Gastrocnemius medialis (tissue), 4 donors: ENCODE measurements at regions of chr17 and their contacts with region 1.

Region 1: GRCh38 chr17:16987830-16988601 is 16.1 kb upstream of the TNFRSF13B start:
- DNase-seq: peak; percentile 30 to 61
- ATAC-seq: peak; percentile 40 to 43
- H3K4me3 ChIP-seq: no peak overlapping the region
- H3K27ac ChIP-seq: no peak overlapping the region
- H3K4me1 ChIP-seq: no peaks in the 10 kb centered on the region
- H3K27me3 ChIP-seq: no peaks in the 10 kb centered on the region
- CTCF ChIP-seq: no peak
- POLR2A ChIP-seq: no peak

Region 2: DNA sequence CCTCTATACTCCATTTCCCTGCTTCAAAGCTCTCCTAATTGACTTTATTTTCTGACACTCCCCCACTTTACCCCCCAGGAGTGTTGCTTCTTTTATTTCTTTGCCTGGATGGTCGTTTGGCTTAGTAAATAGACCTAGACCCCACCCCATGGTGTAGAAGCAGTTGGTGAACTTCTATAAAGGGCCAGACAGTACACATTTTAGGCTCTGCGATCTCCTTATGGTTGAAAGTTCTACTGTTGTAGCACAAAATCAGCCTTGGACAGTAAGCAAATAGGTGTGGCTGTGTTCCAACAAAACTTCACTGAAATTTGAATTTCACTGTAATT is 450.9 kb before region 1 on chr17:
- in situ Hi-C with region 1: no loop called
- intact Hi-C with region 1: loop called (anchors 2 kb)
- DNase-seq: no peak
- ATAC-seq: no peak
- H3K4me3 ChIP-seq: peak overlapping the region in 1 of 4 donors; percentile 79
- H3K27ac ChIP-seq: peak overlapping the region in 1 of 4 donors; percentile 91
- H3K4me1 ChIP-seq: no peaks in the 10 kb centered on the region
- H3K27me3 ChIP-seq: no peaks in the 10 kb centered on the region
- CTCF ChIP-seq: peak in 1 of 5 experiments; percentile 1
- POLR2A ChIP-seq: no peak

Region 3: DNA sequence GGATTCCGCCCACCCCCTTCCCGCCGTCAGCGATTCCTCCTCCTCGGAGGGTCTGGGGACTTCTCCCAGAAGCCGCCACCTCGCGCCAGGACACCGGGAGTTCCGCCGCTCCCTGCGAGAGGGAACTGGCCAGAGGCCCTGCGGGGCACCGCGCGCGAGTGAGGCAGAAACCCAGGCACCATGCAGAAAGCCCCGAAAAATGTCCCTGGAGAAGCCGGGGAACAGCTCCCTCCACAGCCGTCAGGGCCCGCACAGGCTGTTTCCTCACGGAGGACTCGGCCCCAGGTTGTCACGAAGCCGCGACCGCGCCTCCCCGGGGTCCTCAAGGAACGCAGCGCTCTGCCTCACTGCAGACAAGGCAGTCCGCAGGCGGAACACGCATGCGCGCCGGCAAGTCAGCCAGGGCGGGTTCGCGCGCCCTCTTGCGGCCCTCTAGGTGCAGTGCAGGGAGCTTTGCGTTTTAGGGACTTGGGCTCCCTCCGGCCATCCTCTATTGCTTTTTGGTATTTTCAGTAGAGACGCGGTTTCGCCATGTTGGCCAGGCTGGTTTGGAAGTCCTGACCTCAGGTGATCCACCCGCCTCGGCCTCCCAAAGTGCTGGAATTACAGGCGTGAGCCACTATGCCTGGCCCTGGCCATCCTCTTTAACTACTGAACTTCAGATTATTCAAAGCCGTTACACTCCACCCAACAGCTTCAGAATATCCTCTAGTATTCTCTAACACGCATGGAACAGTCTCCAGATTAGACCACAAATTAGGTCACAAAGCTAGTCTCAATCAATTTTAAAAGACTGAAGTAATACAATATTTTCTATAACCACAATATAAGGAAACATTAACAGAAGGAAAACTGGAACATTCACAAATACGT is 398.7 kb before region 1 on chr17:
- in situ Hi-C with region 1: loop called in 2 of 4 experiments (anchors 25 kb)
- intact Hi-C with region 1: no loop called
- DNase-seq: peak; percentile 79 to 84
- ATAC-seq: peak; percentile 90 to 92
- H3K4me3 ChIP-seq: peak overlapping the region; percentile 64 to 79 (median 68)
- H3K27ac ChIP-seq: peak overlapping the region; percentile 35 to 62 (median 55)
- H3K4me1 ChIP-seq: peaks cover 4 to 8% of the 10 kb centered on the region in 2 donors
- H3K27me3 ChIP-seq: peaks cover 0 to 3% (median 0%) of the 10 kb centered on the region in 3 donors
- CTCF ChIP-seq: peak; percentile 91 to 100 (median 92)
- POLR2A ChIP-seq: no peak

Region 4: GRCh38 chr17:17151962-17152361 is 163.9 kb after region 1 on chr17:
- in situ Hi-C with region 1: loop called in 1 of 4 experiments (anchors 10 kb)
- intact Hi-C with region 1: no loop called
- DNase-seq: peak; percentile 92 to 97
- ATAC-seq: peak; percentile 88 to 90
- H3K4me3 ChIP-seq: no peak overlapping the region
- H3K27ac ChIP-seq: peak overlapping the region; percentile 89 to 95 (median 92)
- H3K4me1 ChIP-seq: peaks cover 54 to 66% of the 10 kb centered on the region in 2 donors
- H3K27me3 ChIP-seq: no peaks in the 10 kb centered on the region
- CTCF ChIP-seq: no peak
- POLR2A ChIP-seq: no peak

Region 5: DNA sequence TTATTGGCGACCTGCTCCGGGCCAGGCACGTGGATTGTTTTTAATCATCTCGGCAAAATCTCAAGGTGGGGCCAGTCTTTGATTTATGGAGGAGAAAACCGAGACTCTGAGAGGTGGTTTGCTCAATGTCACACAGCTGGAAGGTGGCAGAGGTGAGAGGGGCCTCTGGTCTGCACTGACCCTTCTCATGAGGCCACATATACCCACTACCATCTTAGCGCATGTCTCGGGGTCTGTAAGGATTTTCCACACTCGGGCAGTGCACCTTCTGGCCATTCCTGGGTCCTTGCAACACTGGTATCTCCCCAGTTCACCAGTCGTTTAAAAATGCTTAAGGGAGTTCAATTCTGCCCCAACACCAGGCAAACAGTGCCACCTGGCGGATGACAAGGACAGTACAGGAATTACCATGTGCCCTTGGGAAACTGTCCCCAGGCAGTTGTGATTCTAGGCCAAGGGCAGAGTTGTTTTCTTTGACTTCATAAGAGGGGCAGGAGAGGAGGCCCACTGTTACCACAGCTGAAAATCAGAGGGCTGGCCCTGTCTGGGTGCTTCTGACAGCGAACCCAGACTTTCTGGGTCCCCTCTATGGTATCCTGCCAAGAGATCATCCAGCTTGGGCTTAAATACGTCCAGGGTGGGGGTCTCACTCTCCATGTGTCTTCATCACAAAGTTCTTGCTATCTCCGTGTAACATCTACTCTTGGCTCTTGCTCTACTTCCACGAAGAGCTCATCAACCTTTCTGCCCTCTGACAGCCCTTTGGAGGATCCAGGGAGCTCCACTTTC is 653.8 kb after region 1 on chr17:
- in situ Hi-C with region 1: loop called in 1 of 4 experiments (anchors 25 kb)
- intact Hi-C with region 1: no loop called
- DNase-seq: peak; percentile 45 to 60
- ATAC-seq: peak; percentile 86 to 89
- H3K4me3 ChIP-seq: no peak overlapping the region
- H3K27ac ChIP-seq: no peak overlapping the region
- H3K4me1 ChIP-seq: no peaks in the 10 kb centered on the region
- H3K27me3 ChIP-seq: no peaks in the 10 kb centered on the region
- CTCF ChIP-seq: peak; percentile 63 to 91 (median 88)
- POLR2A ChIP-seq: no peak